AG04450 (cell line): ENCODE measurements at regions of chr11 and their contacts with region 1.

Region 1: DNA sequence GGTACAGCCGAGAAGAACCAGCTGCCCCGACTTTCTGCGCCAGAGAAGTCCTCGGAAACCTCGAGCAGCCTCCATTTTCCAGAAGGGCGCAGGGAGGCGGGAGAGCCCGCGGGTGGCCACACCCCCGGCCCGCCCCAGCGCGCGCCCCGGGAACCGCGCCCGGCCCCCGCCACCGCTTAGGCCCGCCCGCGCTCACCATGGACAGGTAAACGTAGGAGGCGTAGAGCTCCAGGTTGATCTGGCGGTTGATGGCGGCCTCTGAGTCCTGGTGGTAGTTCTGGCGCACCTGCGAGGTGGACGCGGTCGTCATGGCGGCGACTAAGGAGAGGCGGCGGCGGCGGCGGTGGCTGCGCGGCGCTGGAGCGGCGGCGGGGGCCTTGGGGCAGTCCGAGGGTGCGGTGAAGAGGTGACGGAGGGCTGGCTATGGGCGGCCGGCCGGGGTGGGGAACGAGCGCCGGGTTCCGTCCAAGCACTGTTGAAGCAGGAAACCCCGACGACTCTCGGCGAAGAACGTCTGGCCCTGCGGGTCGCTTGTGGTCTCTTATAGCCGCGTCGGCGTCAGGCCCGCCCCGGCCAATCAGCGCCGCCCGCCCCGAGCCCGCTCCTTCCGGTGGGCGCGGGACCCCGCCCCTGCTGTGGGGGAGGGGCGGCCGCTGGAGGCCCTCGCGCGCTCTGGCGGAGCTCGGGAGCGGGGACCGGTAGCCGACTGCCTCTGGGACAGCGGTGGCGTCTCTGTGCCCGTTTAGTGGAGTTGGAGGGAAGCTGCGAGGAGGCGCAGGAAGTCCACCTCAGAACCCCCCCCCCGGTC is at the start of gene FTH1:
- DNase-seq: peak; percentile 77
- H3K4me3 ChIP-seq: peak within 1 kb of the TSS; percentile 100
- H3K27ac ChIP-seq: peak within 1 kb of the TSS; percentile 88
- H3K27me3 ChIP-seq: no peaks in the 10 kb centered on the region
- CTCF ChIP-seq: no peak
- polyA plus RNA-seq, gene FTH1: 3,294 and 4,220 TPM in 2 replicates

Region 2: DNA sequence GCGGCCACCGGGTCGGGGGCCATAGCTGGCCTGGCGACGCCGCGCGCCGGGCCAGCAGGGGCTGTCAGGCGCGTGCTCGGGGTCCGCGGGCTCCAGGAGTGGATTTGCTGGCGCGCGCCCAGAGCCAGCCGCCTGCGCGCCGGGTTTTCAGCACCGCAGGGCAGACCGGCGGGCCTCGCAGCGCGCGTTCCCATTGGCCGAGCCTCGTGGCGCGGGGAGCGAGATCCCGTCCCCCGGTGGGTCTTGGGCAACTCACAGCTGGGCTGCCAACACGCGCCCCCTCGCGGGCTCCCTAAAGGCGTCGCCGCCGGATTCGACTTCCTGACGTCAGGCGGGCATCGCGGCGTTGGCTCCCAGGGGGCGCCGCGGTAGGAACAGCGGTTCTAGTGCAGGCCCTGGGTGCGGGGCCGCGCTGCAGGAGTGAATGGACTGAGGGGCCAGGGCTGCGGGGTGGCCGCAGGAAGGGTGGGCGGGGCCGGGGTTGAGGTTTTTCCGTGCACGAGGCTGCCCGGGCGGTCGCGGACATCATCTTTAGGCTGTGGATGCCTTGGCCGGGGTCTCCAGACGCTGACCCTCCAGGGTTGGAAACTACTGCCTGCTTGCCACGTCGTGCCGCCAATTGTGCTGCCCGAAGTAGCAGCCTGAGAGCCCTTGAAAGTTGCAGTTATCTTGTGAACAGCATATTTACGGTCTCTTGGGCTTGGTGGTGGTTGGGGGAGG is 150.4 kb before region 1 on chr11 and contains the start of gene FADS1:
- CTCF ChIA-PET with region 1: no interaction called
- POLR2A ChIA-PET with region 1: interaction called, 12 read pairs
- DNase-seq: peak; percentile 89
- H3K4me3 ChIP-seq: peak within 1 kb of the TSS; percentile 89
- H3K27ac ChIP-seq: peak within 1 kb of the TSS; percentile 86
- H3K27me3 ChIP-seq: no peaks in the 10 kb centered on the region
- CTCF ChIP-seq: peak; percentile 57
- polyA plus RNA-seq, gene FADS1: 50.4 and 52.4 TPM in 2 replicates

Region 3: DNA sequence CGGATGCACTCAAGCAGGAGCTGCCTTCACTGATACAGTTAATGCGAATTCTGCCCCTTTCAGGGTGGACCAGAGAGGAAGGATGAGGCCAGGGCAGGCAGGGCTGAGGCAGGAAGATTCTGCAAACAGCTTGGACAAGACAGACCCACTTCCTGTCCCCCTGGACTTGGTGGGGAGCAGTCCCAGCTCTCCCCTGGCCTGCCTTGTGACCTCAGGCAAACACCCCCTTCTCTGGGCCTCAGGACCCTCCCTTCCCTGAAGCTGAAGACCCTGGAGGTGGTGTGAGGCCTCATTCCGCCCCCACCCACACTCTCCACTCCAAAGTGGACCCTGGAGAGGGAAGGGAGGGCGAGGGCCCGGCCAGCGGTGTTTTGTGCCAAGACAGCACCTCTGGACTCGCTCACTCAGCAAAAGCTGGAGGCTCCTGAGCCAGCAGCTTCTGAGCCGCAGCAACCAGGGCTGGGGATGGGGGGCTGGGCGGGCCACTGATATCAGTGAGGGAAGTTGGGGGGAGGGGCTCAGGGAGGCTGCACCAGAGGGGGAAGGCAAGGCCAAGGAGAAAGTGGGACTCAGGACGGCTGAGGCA is 58.5 kb before region 1 on chr11:
- CTCF ChIA-PET with region 1: no interaction called
- POLR2A ChIA-PET with region 1: no interaction called
- DNase-seq: no peak
- H3K4me3 ChIP-seq: no peak overlapping the region
- H3K27ac ChIP-seq: no peak overlapping the region
- H3K27me3 ChIP-seq: peaks cover 2% of the 10 kb centered on the region
- CTCF ChIP-seq: no peak

Region 4: DNA sequence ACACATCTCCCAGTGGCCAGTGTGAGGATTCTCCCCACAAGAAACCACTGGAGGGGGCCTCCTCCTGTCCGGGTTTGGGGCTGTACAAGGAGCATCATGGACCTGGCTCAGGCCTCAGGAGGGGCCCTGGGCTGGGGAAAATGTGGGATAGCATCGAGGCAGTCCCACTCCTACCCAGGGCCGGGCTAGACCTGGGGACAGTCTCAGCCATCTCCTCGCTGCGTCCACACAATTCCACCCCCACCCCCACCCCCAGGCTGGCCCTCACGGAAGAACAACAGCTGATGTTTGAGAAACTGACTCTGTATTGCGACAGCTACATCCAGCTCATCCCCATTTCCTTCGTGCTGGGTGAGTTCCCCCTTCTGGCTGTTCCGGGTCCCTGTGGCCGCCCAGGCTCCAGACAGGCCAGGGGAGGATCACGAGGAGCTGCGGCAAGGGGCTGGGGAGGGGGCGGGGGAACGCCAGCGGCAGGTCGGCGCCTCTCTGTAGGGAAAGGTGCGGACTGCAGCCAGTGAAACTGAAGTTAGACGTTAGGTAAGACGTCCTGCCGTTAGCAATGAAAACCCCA is 12.4 kb before region 1 on chr11:
- CTCF ChIA-PET with region 1: interaction called, 3 read pairs
- POLR2A ChIA-PET with region 1: interaction called, 32 read pairs
- DNase-seq: no peak
- H3K4me3 ChIP-seq: peak overlapping the region; percentile 52
- H3K27ac ChIP-seq: peak overlapping the region; percentile 77
- H3K27me3 ChIP-seq: no peaks in the 10 kb centered on the region
- CTCF ChIP-seq: peak; percentile 31

Region 5: GRCh38 chr11:61978703-61979661 is 11.7 kb after region 1 on chr11:
- CTCF ChIA-PET with region 1: interaction called, 3 read pairs
- POLR2A ChIA-PET with region 1: interaction called, 12 read pairs
- DNase-seq: no peak
- H3K4me3 ChIP-seq: no peak overlapping the region
- H3K27ac ChIP-seq: peak overlapping the region; percentile 70
- H3K27me3 ChIP-seq: no peaks in the 10 kb centered on the region
- CTCF ChIP-seq: no peak

Region 6: DNA sequence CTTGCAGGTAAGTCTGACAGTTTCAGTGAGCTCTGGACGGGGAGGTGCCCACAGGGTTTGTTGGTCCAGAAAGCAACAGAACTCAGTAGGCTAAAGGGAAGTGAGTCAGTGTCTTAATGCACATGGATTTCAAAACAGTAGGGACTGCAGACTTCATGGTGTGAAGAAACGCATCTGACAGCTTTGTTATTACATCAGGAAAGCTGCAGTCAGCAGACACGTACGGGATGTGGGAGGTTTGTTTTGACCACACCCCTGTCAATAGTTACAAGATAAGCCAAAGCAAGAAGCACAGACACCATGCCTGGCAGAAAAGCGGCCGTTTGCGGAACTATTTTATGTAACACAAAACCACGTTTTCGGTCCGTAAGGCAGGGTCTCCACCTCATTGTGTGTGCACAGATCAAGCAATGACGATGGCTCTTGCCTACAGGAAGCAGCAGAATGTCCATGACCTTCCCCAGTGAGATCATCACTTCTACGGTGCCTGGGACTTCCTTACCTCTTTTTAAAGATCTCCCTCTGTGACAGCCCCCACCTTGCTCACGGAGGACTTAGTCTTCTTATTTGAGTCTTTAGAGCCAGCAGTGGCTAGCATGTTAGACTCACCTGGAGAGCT is 58.3 kb after region 1 on chr11:
- CTCF ChIA-PET with region 1: no interaction called
- POLR2A ChIA-PET with region 1: interaction called, 12 read pairs
- DNase-seq: peak; percentile 71
- H3K4me3 ChIP-seq: no peak overlapping the region
- H3K27ac ChIP-seq: peak overlapping the region; percentile 21
- H3K27me3 ChIP-seq: peaks cover 8% of the 10 kb centered on the region
- CTCF ChIP-seq: no peak